RWPE1 (cell line): ENCODE measurements at regions of chr20 and their contacts with region 1.

Region 1: GRCh38 chr20:58236612-58237330 is 8.3 kb upstream of the ANKRD60 start:
- DNase-seq: peak; percentile 95
- H3K27ac ChIP-seq: peak overlapping the region; percentile 6; the same call in 1 of the 2 replicates
- CTCF ChIP-seq: peak; percentile 100

Region 2: GRCh38 chr20:58003525-58003924 is 233.2 kb before region 1 on chr20:
- CTCF ChIA-PET with region 1: no interaction called
- POLR2A ChIA-PET with region 1: no interaction called
- DNase-seq: no peak
- H3K27ac ChIP-seq: no peak overlapping the region
- CTCF ChIP-seq: no peak

Region 3: DNA sequence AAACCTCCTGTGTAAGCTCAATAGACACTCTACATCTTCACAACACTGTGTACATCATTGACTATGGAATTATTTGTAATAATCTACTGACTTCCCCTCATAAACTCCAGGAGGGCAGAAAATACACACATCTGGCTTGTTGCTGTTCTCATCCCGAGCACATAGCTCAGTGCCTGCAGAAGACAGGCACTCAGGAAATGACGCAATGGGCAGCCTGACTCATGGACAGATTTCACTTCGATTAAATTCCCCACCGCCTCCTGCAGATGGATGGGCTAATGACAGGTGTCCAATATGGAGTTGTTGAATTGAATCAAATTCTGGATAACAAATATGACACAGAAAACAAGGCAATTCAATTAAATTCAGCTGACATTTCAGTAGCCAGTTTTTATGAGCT is 17.5 kb before region 1 on chr20:
- CTCF ChIA-PET with region 1: interaction called, 10 read pairs
- POLR2A ChIA-PET with region 1: no interaction called
- DNase-seq: peak; percentile 60
- H3K27ac ChIP-seq: no peak overlapping the region
- CTCF ChIP-seq: no peak